Activated B cell treated with CpG ODN at 0.5 μM for 24 hours (primary cell): ENCODE measurements at regions of chr2 and their contacts with region 1.

Region 1: DNA sequence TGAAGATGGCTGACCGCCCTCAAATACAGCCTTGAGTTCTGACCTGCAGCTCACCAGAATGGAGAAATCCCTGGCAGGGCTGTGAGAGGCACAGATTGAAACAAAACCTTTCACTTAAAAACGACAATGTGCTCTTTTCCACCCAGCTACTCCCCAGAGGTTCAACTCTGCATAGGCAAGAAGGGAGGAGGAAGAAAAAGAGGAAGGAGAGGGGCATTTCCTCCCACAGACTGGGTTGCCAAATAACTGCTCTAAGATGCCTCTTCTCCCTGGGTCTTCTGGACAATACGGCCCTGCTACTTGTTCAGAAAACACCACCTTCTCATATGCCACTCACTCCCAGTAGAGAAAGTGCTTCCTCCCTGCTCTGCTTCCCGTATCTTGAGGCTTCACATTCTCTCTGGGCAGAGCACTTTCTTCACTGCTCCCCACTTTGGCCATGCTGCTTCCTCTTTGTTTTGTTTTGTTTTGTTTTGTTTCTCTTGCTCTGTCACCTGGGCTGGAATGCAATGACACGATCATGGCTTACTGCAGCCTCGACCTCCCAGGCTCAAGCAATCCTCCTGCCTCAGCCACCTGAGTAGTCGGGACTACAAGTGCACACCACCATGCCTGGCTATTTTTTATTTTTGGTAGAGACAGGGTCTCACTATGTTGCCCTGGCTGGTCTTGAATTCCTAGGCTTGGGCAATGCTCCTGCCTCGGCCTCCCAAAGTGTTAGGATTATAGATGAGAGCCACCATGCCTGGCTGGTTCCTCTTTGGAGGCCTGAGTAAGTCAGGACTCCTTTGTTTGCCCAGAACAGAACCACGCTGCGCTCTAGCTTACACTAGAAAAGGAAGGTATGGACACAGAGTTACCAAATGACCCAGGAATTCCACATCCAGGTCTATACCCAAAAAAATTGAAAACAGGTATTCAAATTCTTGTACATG is 136.2 kb upstream of the SLC1A4 start:
- DNase-seq: no peak
- ATAC-seq: peak; percentile 80
- H3K4me3 Mint-ChIP-seq: peak overlapping the region; percentile 45
- H3K27ac Mint-ChIP-seq: peak overlapping the region; percentile 83
- H3K4me1 Mint-ChIP-seq: peaks cover 75% of the 10 kb centered on the region
- H3K27me3 Mint-ChIP-seq: no peaks in the 10 kb centered on the region
- CTCF ChIP-seq: no peak

Region 2: GRCh38 chr2:64819774-64820696 is 33.0 kb before region 1 on chr2:
- CTCF ChIA-PET with region 1: no interaction called
- POLR2A ChIA-PET with region 1: no interaction called
- intact Hi-C with region 1: no loop called
- DNase-seq: no peak
- ATAC-seq: peak; percentile 94
- H3K4me3 Mint-ChIP-seq: peak overlapping the region; percentile 59
- H3K27ac Mint-ChIP-seq: peak overlapping the region; percentile 89
- H3K4me1 Mint-ChIP-seq: peaks cover 50% of the 10 kb centered on the region
- H3K27me3 Mint-ChIP-seq: no peaks in the 10 kb centered on the region
- CTCF ChIP-seq: no peak

Region 3: DNA sequence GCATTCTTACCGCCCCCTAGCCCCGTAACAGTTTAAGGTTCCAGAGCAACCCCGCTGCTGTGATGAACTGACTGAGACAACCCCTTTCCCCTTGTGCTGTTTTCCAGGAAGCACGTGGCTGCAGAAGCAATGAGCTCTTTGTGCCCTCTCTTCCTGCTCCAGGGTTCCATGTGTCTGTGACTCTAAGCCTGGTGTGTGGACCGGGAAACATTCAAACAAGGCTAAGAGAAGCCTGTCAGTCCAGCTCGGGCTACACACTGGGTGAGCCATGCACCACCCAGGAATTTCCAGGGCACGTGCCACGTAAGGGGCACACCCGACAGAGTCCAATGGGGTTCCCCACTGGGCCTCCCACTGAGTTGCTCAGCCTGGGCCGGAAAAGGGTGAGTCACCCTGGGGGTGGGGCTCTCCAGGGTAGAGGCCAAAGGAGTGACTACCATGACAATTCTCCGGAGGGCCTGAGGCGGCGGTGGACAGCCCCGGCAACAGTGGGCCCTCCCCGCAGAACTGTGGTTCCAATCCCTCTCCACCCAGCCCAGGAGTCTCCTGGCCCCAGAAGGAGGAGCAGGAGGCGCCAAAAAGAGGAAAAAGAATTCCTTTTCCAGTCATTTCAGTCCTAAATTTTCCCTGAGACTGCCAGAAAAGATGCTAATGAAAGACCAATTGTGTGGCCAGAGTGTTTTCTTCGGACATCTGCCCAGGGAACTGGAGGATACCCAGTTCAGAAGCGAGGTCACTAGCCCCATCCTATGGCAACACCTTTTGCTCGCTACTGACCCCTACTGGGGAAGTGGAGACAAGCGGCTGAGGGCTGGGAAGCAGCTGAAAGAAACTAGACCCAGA is 21.7 kb before region 1 on chr2:
- CTCF ChIA-PET with region 1: interaction called, 15 read pairs
- POLR2A ChIA-PET with region 1: interaction called, 10 read pairs
- intact Hi-C with region 1: no loop called
- DNase-seq: peak; percentile 75
- ATAC-seq: peak; percentile 96
- H3K4me3 Mint-ChIP-seq: peak overlapping the region; percentile 63
- H3K27ac Mint-ChIP-seq: peak overlapping the region; percentile 82
- H3K4me1 Mint-ChIP-seq: peaks cover 21% of the 10 kb centered on the region
- H3K27me3 Mint-ChIP-seq: no peaks in the 10 kb centered on the region
- CTCF ChIP-seq: no peak

Region 4: DNA sequence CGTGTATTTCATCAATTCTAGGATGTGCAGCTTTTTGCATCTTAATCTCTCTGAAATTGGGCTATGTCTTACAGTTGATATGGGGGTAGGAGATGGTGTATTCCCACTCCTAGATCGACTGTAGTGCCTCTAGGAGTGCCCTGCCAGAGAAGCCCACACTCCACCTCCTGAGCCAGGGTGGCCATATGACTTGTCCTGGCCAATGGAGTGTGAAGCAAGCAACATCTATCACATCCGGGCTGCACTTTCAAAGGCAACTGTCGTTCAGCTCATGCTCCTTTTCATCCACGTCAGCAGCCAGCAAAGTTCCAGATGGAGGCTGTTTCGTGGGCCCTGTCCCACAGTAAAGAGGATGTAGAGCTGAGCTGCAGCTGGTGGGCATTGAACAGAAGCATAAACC is 13.2 kb before region 1 on chr2:
- CTCF ChIA-PET with region 1: interaction called, 6 read pairs
- POLR2A ChIA-PET with region 1: interaction called, 81 read pairs
- intact Hi-C with region 1: no loop called
- DNase-seq: no peak
- ATAC-seq: peak; percentile 92
- H3K4me3 Mint-ChIP-seq: peak overlapping the region; percentile 61
- H3K27ac Mint-ChIP-seq: peak overlapping the region; percentile 92
- H3K4me1 Mint-ChIP-seq: peaks cover 51% of the 10 kb centered on the region
- H3K27me3 Mint-ChIP-seq: no peaks in the 10 kb centered on the region
- CTCF ChIP-seq: no peak

Region 5: DNA sequence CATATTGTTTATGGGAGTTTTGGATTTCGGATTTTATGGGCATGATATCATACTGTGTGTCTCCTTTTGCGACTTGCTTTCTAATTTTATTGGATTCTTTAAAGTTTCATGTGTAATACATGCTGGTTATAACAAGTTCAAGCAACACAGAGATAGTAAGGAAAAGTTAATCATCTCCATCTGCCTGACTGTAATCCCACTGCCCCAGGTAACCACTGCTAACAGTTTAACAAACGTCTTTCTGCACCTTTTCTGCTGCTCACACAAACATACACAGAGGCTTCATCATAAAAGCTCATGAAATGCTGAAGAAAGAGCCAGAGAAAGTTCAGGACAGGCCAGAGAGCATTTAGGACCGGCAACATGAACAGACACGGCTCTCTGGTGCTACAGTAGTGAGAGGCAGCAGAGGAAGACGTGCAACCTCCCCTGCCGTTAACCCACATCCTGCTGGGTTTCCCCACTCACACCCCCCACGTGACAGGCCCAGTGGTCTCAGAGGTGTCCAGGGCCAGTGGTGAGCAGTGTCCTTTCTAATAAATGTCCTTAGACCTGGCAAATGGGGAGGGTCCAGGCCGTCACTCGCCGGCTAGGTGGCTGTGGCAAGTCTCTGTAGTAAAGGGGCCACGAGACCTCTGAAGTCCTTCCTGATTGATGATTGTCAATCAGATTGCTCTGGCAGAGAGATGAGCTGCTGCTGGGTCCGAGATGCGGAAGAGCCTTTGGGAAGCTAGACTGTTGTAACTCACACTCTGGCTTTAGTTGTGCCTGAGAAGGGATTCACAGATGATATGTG is 93.1 kb after region 1 on chr2:
- CTCF ChIA-PET with region 1: no interaction called
- POLR2A ChIA-PET with region 1: no interaction called
- intact Hi-C with region 1: no loop called
- DNase-seq: peak; percentile 61
- ATAC-seq: peak; percentile 93
- H3K4me3 Mint-ChIP-seq: peak overlapping the region; percentile 78
- H3K27ac Mint-ChIP-seq: peak overlapping the region; percentile 93
- H3K4me1 Mint-ChIP-seq: peaks cover 69% of the 10 kb centered on the region
- H3K27me3 Mint-ChIP-seq: no peaks in the 10 kb centered on the region
- CTCF ChIP-seq: no peak